ENCODE measurements at regions of chr14 and their contacts with region 1.

Region 1: DNA sequence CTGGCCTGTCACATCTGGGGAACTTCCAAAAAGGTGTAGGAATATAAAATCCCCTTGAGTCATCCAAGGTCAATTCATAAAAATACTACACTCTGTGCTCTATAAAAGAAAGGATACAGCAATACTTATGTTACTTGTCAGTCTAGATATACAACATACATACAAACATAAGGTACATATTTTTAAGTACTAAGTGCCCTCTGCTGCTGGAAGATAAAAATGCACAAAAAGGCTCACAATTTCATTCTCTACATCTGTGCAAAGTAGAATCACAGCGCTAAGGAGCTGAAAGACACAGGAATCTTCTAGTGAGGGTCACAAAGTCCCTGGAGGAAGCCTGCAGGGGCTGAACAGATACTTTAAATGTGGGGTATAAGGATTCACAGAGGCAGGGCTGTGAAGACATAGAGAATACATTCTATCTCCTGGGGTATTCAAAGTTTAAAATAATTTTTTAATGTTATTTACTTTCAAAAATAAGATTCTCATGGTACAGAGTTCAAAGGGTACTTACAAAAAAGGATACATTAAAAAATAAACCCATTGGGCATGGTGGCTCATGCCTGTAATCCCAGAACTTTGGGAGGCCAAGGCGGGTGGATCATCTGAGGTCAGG is 10.2 kb upstream of the GOLGA5 start:
- DNase-seq: no peak
- ATAC-seq: peak; percentile 88
- H3K4me3 ChIP-seq: no peak overlapping the region
- H3K27ac ChIP-seq: no peak overlapping the region
- H3K4me1 ChIP-seq: 0 out of 2 replicates have a peak, but pooled peaks cover 3% of the 10 kb centered on the region
- H3K27me3 ChIP-seq: no peaks in the 10 kb centered on the region
- CTCF ChIP-seq: peak; percentile 52 to 66 (median 62); a peak in 5 of 6 replicates
- EP300 ChIP-seq: no peak
- POLR2A ChIP-seq: no peak
- RAD21 ChIP-seq: peak; percentile 77

Region 2: DNA sequence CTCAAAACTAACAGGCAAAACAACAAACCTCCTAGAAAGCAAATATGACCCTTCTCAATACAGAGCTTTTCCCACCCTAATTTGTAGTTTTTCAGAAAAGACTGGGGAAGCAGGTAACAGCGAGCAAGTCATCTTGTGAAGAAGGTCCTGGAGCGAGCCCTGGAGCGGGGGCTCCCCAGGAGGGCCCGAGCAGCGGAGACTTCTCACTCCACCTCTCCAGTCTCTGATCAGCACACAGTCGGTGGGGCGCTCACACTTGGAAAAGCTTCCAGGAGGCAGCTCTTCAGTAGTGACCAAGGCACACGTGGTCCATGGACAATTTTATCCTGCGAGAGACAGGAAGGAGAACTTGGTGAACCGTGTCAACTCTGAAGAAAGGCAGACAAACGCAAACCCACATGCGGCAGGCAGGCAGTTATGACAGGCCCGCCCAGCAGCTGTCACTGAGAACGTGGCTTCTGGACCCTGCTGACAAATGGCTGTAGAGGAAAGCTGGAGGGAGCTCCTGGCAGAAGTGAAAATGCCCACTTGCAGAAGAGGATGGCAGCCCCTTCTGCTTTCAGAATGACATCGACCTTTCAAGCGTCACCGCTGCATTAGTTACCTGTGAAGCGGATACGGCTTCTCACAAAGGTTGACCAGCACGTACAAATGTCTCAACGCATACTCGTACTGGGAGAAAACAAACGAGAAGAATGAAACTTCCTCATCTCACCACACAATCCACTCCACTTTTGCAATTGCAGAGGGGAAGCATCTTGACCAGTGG is 79.7 kb before region 1 on chr14:
- CTCF ChIA-PET with region 1: interaction called, 5 read pairs
- POLR2A ChIA-PET with region 1: no interaction called
- RAD21 ChIA-PET with region 1: interaction called, 10 read pairs
- SMC1A ChIA-PET with region 1: interaction called, 151 read pairs
- in situ Hi-C with region 1: no loop called
- intact Hi-C with region 1: no loop called
- DNase-seq: peak; percentile 92
- ATAC-seq: peak; percentile 97
- H3K4me3 ChIP-seq: 0 out of 2 replicates have a peak overlapping the region, but pooled peaks have one; percentile 2
- H3K27ac ChIP-seq: peak overlapping the region; percentile 29; the same call in 1 of the 2 replicates
- H3K4me1 ChIP-seq: peaks cover 26% of the 10 kb centered on the region
- H3K27me3 ChIP-seq: no peaks in the 10 kb centered on the region
- CTCF ChIP-seq: no peak
- EP300 ChIP-seq: peak; percentile 50 to 70; a peak in 3 of 4 replicates
- POLR2A ChIP-seq: no peak
- RAD21 ChIP-seq: no peak

Region 3: GRCh38 chr14:92719890-92720323 is 64.0 kb before region 1 on chr14:
- CTCF ChIA-PET with region 1: interaction called, 122 read pairs
- POLR2A ChIA-PET with region 1: interaction called, 7 read pairs
- RAD21 ChIA-PET with region 1: interaction called, 106 read pairs
- SMC1A ChIA-PET with region 1: interaction called, 151 read pairs
- in situ Hi-C with region 1: no loop called
- intact Hi-C with region 1: no loop called
- DNase-seq: no peak
- ATAC-seq: no peak
- H3K4me3 ChIP-seq: no peak overlapping the region
- H3K27ac ChIP-seq: no peak overlapping the region
- H3K4me1 ChIP-seq: no peaks in the 10 kb centered on the region
- H3K27me3 ChIP-seq: no peaks in the 10 kb centered on the region
- CTCF ChIP-seq: no peak
- EP300 ChIP-seq: no peak
- POLR2A ChIP-seq: no peak
- RAD21 ChIP-seq: no peak

Region 4: GRCh38 chr14:92748259-92749016 is 35.5 kb before region 1 on chr14 and contains the start of gene LGMN:
- CTCF ChIA-PET with region 1: interaction called, 8 read pairs
- POLR2A ChIA-PET with region 1: interaction called, 4 read pairs
- RAD21 ChIA-PET with region 1: interaction called, 5 read pairs
- SMC1A ChIA-PET with region 1: interaction called, 16 read pairs
- in situ Hi-C with region 1: no loop called
- intact Hi-C with region 1: loop called (anchors 2 kb)
- DNase-seq: no peak
- ATAC-seq: peak; percentile 92
- H3K4me3 ChIP-seq: peak within 1 kb of the TSS; percentile 81
- H3K27ac ChIP-seq: peak within 1 kb of the TSS; percentile 45
- H3K4me1 ChIP-seq: peaks cover 31% of the 10 kb centered on the region
- H3K27me3 ChIP-seq: no peaks in the 10 kb centered on the region
- CTCF ChIP-seq: no peak
- EP300 ChIP-seq: no peak; a peak in 1 of 4 replicates
- POLR2A ChIP-seq: peak; percentile 96
- RAD21 ChIP-seq: no peak
- polyA plus RNA-seq, gene LGMN: 0.71 to 1.1 TPM

Measured in GM12878 (cell line).